A549 (cell line): ENCODE measurements at regions of chr1 and their contacts with region 1.

Region 1: GRCh38 chr1:19405761-19406487 is 79.4 kb downstream of the CAPZB start:
- DNase-seq: no peak
- ATAC-seq: no peak
- H3K4me3 ChIP-seq: no peak overlapping the region
- H3K27ac ChIP-seq: no peak overlapping the region
- H3K4me1 ChIP-seq: no peaks in the 10 kb centered on the region
- CTCF ChIP-seq: no peak
- EP300 ChIP-seq: no peak
- POLR2A ChIP-seq: no peak
- RAD21 ChIP-seq: no peak

Region 2: DNA sequence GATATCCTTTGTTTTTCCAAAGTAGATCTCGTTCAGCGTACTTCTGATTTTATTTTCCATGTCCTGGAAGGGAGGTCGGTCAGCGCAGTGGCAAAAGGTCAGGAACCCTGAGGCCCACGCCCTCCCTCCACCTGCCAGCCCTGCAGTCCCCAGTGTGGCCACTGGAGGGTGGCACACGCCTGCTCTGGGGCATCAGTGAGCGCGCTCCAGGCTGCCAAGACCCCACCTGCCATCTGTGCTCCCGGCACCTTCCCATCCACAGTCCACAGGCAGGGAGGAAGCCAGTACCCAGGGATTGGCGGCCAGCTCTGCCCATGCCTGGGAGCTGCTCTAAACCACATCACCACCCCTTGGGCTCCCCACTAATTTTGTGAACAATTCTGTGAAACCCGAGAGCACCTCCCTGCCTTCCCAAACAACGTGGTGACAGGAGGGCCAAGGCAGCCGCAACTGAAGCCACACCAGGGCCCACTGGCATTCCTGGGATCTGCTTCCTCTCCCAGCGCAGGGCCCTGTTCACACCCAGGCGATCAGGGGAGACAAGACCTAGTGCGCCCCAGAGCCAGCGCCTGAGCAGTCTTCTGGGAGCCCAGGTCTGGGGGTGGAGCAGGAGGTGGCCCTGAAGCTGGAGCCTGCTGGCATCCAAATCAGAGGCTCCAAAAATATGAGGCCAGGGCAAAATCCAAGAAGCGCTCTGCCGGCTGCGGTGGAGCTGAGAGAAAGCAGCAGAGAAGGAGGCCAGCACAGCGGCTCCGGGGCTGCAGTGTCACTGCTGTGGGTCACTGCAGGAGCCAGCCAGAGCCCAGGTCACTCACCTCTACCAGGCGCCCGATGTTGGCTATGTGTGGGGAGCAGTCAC is 61.3 kb before region 1 on chr1:
- CTCF ChIA-PET with region 1: interaction called, 10 read pairs
- POLR2A ChIA-PET with region 1: no interaction called
- DNase-seq: peak; percentile 31 to 44
- ATAC-seq: peak; percentile 82 to 86
- H3K4me3 ChIP-seq: no peak overlapping the region
- H3K27ac ChIP-seq: no peak overlapping the region
- H3K4me1 ChIP-seq: no peaks in the 10 kb centered on the region
- CTCF ChIP-seq: peak; percentile 57
- EP300 ChIP-seq: no peak
- POLR2A ChIP-seq: no peak
- RAD21 ChIP-seq: peak; percentile 71 to 73

Region 3: DNA sequence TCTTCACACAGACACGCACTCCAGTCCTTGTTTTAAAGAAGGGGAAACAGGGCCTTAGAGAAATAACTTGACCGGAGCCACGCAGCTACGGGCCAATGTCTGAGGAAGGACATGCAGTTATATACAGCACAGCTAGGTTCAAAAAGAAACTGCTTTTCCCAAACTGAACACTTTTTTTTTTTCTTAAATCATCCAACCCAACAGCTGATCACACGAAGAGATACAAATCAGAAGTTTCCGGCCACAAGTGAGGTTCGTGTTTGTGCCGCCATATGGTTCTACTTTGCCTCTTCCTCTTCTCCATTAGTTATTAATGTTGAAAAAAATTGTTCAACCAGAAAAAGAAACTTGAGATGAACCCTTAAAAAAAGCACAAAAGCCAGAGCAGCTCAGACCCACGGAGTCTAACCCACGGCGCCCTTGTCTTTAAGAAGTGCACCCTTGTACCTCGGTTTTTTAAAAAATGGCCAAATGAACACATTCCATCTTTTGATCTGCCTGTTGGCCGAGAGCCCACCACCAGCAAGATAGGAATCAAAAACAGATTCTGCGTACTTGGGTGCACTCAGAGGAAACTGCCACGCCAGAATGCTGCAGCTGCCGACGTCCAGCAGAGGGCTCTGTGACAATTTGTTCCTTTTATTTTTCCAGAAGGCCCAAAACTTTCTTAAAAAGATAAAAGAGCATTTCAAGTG is 14.9 kb before region 1 on chr1:
- CTCF ChIA-PET with region 1: interaction called, 11 read pairs
- POLR2A ChIA-PET with region 1: no interaction called
- DNase-seq: peak; percentile 12 to 18
- ATAC-seq: peak in 1 of 2 experiments; percentile 61; a peak in 3 of 6 replicates
- H3K4me3 ChIP-seq: no peak overlapping the region
- H3K27ac ChIP-seq: no peak overlapping the region
- H3K4me1 ChIP-seq: no peaks in the 10 kb centered on the region; the same call in 2 of the 3 replicates
- CTCF ChIP-seq: peak; percentile 59
- EP300 ChIP-seq: no peak
- POLR2A ChIP-seq: no peak
- RAD21 ChIP-seq: peak; percentile 57 to 59